Activated T-helper 1 cell treated with anti-CD3 and anti-CD28 coated beads, Interleukin-12 subunit alpha, Interleukin-12 subunit beta, Interleukin-2, Interleukin-4 antibody, amounts not matched to agents 30 ng/mL and 10 ng/mL and 1 ng/mL, durations not matched to agents 14 hours and 24 hours and 36 hours (primary cell): ENCODE measurements at regions of chr14 and their contacts with region 1.

Region 1: DNA sequence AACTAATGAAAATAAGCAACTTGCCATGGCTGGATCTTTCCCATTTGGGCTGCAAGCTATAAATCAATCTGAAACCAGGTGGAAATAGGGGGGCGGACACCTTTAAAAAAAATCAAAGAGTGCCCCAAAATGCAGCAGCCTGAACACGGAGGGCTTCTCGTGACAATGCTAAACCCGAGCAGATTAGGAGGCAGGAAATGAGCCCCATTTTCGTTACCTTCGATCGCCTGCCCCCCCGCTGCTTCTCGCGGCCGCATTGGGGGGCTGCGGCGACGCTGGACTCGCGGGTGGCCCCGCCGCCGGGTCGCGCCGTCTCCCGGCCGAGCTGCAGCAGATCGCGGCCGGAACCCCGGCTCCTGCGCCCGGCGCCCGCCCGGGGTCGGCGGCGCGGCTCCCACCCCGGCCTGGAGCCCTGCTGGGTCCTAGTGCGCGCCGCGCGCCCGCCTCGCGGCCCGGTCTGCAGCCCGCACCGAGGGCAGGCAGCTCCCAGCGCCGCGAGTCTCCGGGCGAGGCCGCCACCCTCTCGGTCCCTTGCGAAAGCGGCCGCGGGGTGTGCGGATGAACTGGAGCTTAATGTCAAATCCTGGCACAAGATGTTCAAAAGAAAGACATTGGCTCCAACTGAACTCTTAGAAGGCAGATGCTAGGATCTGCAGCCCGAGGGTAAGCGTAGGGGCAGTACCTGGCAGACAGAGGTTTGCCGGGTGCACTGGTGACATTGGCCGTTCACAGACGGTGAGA is 201.9 kb upstream of the FOXN3 start:
- DNase-seq: peak; percentile 69
- H3K4me3 Mint-ChIP-seq: peak overlapping the region; percentile 95
- H3K27ac Mint-ChIP-seq: peak overlapping the region; percentile 99
- H3K4me1 Mint-ChIP-seq: peaks cover 72% of the 10 kb centered on the region
- H3K27me3 Mint-ChIP-seq: no peaks in the 10 kb centered on the region

Region 2: DNA sequence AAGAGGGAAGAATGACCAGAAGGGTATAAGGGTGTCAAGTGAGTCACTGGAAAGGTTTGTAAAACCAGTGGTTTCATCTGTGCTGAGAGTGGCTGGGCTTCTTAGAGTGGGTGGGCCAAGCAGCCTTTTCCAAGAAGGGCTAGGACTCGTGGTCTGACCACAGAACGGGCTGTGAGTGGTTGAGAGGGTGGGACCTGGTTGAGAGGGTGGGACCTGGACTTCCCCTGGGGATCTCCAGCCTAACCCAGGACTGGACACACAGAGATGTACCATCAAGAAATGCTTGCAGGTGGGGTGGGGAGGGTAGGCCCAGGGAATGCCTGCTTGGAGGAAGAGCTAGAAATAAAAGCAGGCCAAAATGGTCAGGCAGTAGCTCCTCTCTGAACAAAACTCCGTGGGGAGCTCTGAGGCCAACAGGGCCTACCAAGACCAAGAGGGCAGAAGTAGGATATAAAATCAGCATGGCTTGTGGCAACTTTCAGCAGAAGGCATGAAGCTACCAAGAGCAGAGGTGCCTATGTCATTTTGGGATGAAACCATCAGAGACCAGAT is 342.5 kb before region 1 on chr14:
- intact Hi-C with region 1: loop called (anchors 2 kb)
- DNase-seq: peak; percentile 78
- H3K4me3 Mint-ChIP-seq: peak overlapping the region; percentile 70
- H3K27ac Mint-ChIP-seq: peak overlapping the region; percentile 98
- H3K4me1 Mint-ChIP-seq: peaks cover 79% of the 10 kb centered on the region
- H3K27me3 Mint-ChIP-seq: no peaks in the 10 kb centered on the region

Region 3: DNA sequence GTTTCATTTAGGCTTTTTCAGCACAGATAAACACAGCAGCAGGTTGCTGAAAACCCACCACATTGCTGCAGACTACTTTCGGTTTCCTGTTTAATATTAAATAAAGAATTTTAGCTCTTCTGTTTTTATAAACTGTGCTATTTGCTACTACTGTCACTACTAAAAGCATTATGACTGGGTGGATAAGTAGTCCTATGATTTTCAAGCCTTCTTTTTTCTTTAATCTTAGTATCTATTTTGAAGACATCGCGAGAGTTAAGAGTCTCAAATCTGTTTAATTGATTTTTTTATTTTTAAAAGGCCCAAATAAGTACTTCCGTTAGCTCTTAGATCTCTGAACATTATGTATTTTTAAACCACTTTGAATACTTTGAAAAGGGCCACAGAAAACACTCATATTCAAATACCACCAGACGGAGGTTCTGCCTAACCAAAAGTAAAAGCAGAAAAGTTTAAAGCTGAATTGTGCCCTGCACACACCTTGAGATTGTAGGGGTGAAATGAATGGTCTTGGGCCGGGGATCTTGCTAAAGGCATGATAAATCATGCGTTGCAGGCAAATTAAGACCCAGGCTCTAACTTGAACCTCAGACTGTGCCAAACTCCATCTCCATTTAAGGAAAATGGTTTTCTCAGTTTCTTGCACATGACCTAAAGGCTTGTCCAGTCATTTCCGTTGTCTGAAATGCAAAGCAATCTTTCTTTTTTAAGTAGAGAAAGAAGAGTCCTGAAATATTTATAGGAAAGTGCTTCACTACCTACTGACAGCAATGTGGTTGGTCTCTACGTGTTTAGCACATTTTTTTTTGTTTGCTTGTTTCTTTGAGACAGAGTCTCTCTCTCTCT is 188.4 kb before region 1 on chr14:
- intact Hi-C with region 1: loop called (anchors 1 kb)
- DNase-seq: peak; percentile 42
- H3K4me3 Mint-ChIP-seq: peak overlapping the region; percentile 79
- H3K27ac Mint-ChIP-seq: peak overlapping the region; percentile 85
- H3K4me1 Mint-ChIP-seq: peaks cover 56% of the 10 kb centered on the region
- H3K27me3 Mint-ChIP-seq: no peaks in the 10 kb centered on the region

Region 4: GRCh38 chr14:89540830-89541470 is 78.0 kb before region 1 on chr14:
- intact Hi-C with region 1: no loop called
- DNase-seq: no peak
- H3K4me3 Mint-ChIP-seq: no peak overlapping the region
- H3K27ac Mint-ChIP-seq: no peak overlapping the region
- H3K4me1 Mint-ChIP-seq: peaks cover 10% of the 10 kb centered on the region
- H3K27me3 Mint-ChIP-seq: no peaks in the 10 kb centered on the region

Region 5: DNA sequence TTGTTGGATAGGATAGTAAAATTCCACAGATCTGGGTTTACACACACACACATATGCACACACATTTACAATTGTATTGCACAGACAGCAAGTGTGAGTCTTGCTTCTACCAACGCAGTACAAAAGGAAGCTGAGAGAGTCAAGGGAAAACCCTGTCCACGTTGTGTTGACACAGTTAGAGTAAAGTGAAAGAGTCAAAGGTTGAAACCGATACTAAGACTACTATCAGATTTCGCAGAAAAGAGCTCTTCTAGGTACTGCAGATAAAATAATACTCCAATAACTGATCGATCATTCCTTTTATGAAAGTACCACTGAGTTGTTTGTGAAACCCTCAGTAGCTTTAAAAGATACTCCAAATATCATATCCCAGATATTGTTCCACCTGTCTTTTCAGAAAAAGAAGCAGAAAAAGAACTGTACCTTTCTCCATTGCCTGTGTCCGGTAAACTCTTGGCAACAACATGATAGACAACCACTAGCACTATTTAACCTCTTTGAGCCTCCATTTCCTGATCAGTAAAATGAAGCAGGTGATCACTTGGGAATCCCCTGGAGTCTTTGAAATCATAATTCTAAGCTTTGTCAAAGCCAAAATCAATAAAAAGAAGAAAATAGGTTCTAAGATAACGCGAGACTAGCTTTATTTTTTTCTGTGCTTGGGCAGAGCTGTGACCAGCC is 22.7 kb after region 1 on chr14:
- intact Hi-C with region 1: loop called (anchors 1 kb)
- DNase-seq: peak; percentile 41
- H3K4me3 Mint-ChIP-seq: peak overlapping the region; percentile 59
- H3K27ac Mint-ChIP-seq: peak overlapping the region; percentile 87
- H3K4me1 Mint-ChIP-seq: peaks cover 59% of the 10 kb centered on the region
- H3K27me3 Mint-ChIP-seq: no peaks in the 10 kb centered on the region

Region 6: GRCh38 chr14:89672636-89673511 is 53.9 kb after region 1 on chr14:
- intact Hi-C with region 1: no loop called
- DNase-seq: no peak
- H3K4me3 Mint-ChIP-seq: peak overlapping the region; percentile 23
- H3K27ac Mint-ChIP-seq: no peak overlapping the region
- H3K4me1 Mint-ChIP-seq: peaks cover 39% of the 10 kb centered on the region
- H3K27me3 Mint-ChIP-seq: no peaks in the 10 kb centered on the region

Region 7: DNA sequence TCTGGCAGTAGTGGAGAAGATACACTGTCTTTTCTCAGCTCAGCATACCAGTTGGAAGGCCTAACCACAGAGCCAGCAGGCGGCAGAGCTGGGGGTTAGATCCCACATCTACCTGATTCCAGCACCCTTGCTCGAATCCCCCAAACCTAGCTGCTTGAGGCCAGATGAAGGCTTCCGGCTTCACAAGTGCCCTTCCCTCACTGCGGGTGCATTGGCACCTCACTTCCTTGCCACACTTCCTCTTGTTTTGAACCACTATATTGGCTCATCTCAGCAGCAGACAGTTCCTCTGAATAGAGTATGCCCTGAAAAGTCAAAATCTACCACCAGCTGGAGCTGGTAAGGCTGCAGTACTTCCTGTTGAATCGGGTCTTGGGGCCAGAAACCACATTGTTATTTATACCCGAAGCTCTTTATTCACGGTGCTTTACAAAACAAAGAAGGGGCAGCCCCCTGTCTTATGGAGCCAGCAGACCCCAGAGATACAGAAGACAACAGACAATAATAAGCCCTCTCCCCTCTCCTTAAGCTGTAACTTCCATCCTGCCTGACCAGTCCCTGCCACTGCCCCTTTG is 101.8 kb after region 1 on chr14:
- intact Hi-C with region 1: loop called (anchors 2 kb)
- DNase-seq: peak; percentile 59
- H3K4me3 Mint-ChIP-seq: peak overlapping the region; percentile 49
- H3K27ac Mint-ChIP-seq: peak overlapping the region; percentile 86
- H3K4me1 Mint-ChIP-seq: peaks cover 64% of the 10 kb centered on the region
- H3K27me3 Mint-ChIP-seq: no peaks in the 10 kb centered on the region